Aorta (tissue), 5 donors: ENCODE measurements at regions of chr12 and their contacts with region 1.

Region 1: DNA sequence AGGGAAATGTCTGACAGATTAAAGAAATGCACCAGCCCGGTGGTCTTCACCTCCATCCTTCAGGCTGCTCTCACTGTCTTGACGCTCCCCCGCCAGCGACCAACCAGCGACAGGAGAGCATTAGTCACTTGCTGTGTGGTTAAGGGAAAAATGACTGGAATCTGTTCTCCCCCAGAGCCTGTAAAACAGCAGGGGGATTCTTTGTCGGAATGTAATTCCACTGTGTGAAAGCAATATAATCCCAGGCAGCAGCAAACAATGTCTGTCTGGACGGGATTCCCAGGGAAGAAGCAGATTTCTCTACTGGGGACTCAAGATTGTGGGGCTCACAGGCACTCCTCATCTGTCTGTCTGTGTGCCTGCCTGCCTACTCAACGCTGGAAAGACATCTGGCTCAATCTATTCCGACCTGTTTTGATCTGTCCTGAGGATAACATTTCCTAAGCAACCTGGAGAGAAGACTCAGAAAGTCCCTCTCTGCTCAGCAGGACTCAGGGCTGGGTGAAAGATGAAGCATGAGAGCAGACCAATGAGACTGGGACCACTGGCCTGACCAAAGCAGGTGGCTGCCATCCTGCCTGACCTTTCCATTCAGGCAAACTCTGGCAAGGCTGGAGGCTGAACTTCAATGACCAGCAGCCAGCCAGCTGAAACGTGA is 54.6 kb downstream of the NUAK1 start:
- DNase-seq: no peak
- ATAC-seq: no peak
- H3K4me3 ChIP-seq: no peak overlapping the region
- H3K27ac ChIP-seq: peak overlapping the region in 1 of 2 donors; percentile 95
- H3K4me1 ChIP-seq: peaks cover 7 to 10% of the 10 kb centered on the region in 2 donors
- H3K27me3 ChIP-seq: no peaks in the 10 kb centered on the region

Region 2: GRCh38 chr12:105676694-105677093 is 407.4 kb before region 1 on chr12:
- intact Hi-C with region 1: no loop called
- DNase-seq: peak in 1 of 2 donors; percentile 56
- ATAC-seq: no peak
- H3K4me3 ChIP-seq: no peak overlapping the region
- H3K27ac ChIP-seq: no peak overlapping the region
- H3K4me1 ChIP-seq: peaks cover 0 to 12% of the 10 kb centered on the region in 2 donors
- H3K27me3 ChIP-seq: no peaks in the 10 kb centered on the region

Region 3: DNA sequence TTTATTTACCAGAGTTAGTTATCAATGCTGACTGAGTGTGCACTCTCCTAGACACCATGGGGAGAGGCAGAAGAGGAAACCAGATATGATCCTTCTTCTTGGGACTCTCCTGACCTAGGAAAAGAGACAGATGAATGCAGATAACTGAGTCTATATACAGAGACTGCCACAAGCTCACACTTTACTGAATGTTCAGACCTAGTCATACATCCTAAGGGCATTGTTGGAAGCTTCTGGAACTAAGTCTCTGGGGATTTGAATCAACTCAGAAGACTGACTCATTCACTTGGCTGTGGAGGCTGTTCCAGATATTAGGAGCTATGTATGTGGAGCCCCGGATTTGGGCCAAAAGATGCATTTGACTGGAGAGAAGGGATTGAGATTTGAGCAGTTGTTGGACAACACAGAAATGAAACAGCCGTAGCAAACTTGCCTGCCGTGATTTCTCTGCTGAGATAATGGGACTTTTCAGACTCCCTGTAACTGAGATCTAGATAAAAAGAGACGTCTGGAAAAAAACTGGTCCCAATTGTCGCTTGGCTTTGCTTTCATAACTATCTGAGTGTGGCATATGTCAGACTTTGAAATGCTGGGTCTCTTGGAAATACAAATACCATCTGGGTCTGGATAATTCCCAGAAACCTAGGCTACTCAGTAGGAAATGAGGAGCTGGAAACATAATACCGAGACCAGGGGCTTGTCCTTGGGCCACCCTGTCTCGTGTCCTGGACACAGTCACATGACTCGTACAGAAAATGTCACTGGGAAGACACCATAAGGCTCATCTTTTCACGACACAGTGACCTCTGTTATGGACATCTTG is 342.2 kb before region 1 on chr12:
- intact Hi-C with region 1: loop called in 1 of 2 experiments (anchors 10 kb)
- DNase-seq: peak in 1 of 2 donors; percentile 55
- ATAC-seq: peak; percentile 64
- H3K4me3 ChIP-seq: no peak overlapping the region
- H3K27ac ChIP-seq: peak overlapping the region; percentile 69 to 80
- H3K4me1 ChIP-seq: peaks cover 13 to 16% of the 10 kb centered on the region in 2 donors
- H3K27me3 ChIP-seq: no peaks in the 10 kb centered on the region

Region 4: DNA sequence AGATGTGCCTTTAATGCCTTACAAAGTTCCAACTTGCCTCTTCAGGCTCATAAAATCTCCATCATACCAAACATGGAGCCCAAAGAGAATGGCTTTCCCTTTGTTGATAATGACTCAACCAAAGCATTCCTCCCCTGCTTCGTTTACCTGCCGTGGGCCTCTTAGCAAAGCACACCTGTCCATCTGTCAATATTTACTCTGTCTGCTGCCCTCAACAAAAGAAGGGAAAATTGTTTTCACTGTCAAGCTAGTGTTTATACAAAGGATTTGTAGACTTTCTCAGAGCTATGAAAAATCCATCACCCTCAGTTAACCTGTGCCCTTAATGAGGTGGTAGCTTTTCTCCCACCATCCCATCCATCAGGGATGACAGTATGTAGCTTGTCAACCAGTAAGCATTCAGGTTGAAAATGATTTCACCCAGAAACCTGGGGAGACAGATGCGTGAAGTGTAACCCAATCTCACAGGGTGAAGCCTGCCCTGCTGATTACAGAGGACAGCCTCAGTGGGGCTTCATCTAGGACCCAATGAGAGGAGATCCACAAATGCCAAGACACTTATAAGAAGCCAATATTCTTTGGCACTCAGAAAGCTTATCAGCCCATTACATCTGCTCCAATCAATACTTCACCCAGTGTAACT is 223.5 kb before region 1 on chr12:
- intact Hi-C with region 1: loop called in 1 of 2 experiments (anchors 10 kb)
- DNase-seq: no peak
- ATAC-seq: no peak
- H3K4me3 ChIP-seq: no peak overlapping the region
- H3K27ac ChIP-seq: no peak overlapping the region
- H3K4me1 ChIP-seq: peaks cover 0 to 2% of the 10 kb centered on the region in 2 donors
- H3K27me3 ChIP-seq: no peaks in the 10 kb centered on the region

Region 5: GRCh38 chr12:105948331-105948730 is 135.8 kb before region 1 on chr12:
- intact Hi-C with region 1: loop called in 1 of 2 experiments (anchors 10 kb)
- DNase-seq: peak in 1 of 2 donors; percentile 50
- ATAC-seq: peak; percentile 64
- H3K4me3 ChIP-seq: no peak overlapping the region
- H3K27ac ChIP-seq: peak overlapping the region; percentile 65 to 76
- H3K4me1 ChIP-seq: peaks cover 2 to 12% of the 10 kb centered on the region in 2 donors
- H3K27me3 ChIP-seq: no peaks in the 10 kb centered on the region

Region 6: GRCh38 chr12:105967038-105967776 is 116.9 kb before region 1 on chr12:
- intact Hi-C with region 1: loop called in 1 of 2 experiments (anchors 5 kb)
- DNase-seq: no peak
- ATAC-seq: peak; percentile 66
- H3K4me3 ChIP-seq: no peak overlapping the region
- H3K27ac ChIP-seq: peak overlapping the region; percentile 92 to 94
- H3K4me1 ChIP-seq: peaks cover 0 to 2% of the 10 kb centered on the region in 2 donors
- H3K27me3 ChIP-seq: no peaks in the 10 kb centered on the region

Region 7: GRCh38 chr12:106044773-106045172 is 39.4 kb before region 1 on chr12:
- intact Hi-C with region 1: no loop called
- DNase-seq: no peak
- ATAC-seq: no peak
- H3K4me3 ChIP-seq: no peak overlapping the region
- H3K27ac ChIP-seq: no peak overlapping the region
- H3K4me1 ChIP-seq: no peaks in the 10 kb centered on the region
- H3K27me3 ChIP-seq: no peaks in the 10 kb centered on the region

Region 8: GRCh38 chr12:106123551-106124081 is 39.5 kb after region 1 on chr12:
- intact Hi-C with region 1: loop called in 1 of 2 experiments (anchors 5 kb)
- DNase-seq: peak; percentile 60 to 84
- ATAC-seq: peak; percentile 58
- H3K4me3 ChIP-seq: no peak overlapping the region
- H3K27ac ChIP-seq: peak overlapping the region; percentile 73 to 96
- H3K4me1 ChIP-seq: peaks cover 10 to 19% of the 10 kb centered on the region in 2 donors
- H3K27me3 ChIP-seq: no peaks in the 10 kb centered on the region

Region 9: GRCh38 chr12:106519607-106520021 is 435.5 kb after region 1 on chr12:
- intact Hi-C with region 1: no loop called
- DNase-seq: no peak
- ATAC-seq: no peak
- H3K4me3 ChIP-seq: no peak overlapping the region
- H3K27ac ChIP-seq: no peak overlapping the region
- H3K4me1 ChIP-seq: no peaks in the 10 kb centered on the region
- H3K27me3 ChIP-seq: no peaks in the 10 kb centered on the region